ENCODE measurements at regions of chr2 and their contacts with region 1.

Region 1: GRCh38 chr2:102449370-102449974 is 23.6 kb upstream of the SLC9A4 start:
- DNase-seq: peak in 3 of 5 donors; percentile 11 to 31 (median 27)
- ATAC-seq: no peak
- H3K4me3 ChIP-seq: no peak overlapping the region
- H3K27ac ChIP-seq: no peak overlapping the region
- H3K4me1 ChIP-seq: no peaks in the 10 kb centered on the region
- H3K27me3 ChIP-seq: no peaks in the 10 kb centered on the region
- CTCF ChIP-seq: peak; percentile 47 to 77 (median 62)
- POLR2A ChIP-seq: no peak

Region 2: GRCh38 chr2:101419096-101419663 is 1030.3 kb before region 1 on chr2:
- intact Hi-C with region 1: loop called in 2 of 10 experiments (anchors 5 to 10 kb)
- DNase-seq: peak in 4 of 5 donors; percentile 47 to 68 (median 62)
- ATAC-seq: peak; percentile 55 to 89 (median 76)
- H3K4me3 ChIP-seq: no peak overlapping the region
- H3K27ac ChIP-seq: no peak overlapping the region
- H3K4me1 ChIP-seq: peaks cover 0 to 4% (median 0%) of the 10 kb centered on the region in 12 donors
- H3K27me3 ChIP-seq: no peaks in the 10 kb centered on the region
- CTCF ChIP-seq: peak; percentile 66 to 90 (median 83)
- POLR2A ChIP-seq: no peak

Region 3: DNA sequence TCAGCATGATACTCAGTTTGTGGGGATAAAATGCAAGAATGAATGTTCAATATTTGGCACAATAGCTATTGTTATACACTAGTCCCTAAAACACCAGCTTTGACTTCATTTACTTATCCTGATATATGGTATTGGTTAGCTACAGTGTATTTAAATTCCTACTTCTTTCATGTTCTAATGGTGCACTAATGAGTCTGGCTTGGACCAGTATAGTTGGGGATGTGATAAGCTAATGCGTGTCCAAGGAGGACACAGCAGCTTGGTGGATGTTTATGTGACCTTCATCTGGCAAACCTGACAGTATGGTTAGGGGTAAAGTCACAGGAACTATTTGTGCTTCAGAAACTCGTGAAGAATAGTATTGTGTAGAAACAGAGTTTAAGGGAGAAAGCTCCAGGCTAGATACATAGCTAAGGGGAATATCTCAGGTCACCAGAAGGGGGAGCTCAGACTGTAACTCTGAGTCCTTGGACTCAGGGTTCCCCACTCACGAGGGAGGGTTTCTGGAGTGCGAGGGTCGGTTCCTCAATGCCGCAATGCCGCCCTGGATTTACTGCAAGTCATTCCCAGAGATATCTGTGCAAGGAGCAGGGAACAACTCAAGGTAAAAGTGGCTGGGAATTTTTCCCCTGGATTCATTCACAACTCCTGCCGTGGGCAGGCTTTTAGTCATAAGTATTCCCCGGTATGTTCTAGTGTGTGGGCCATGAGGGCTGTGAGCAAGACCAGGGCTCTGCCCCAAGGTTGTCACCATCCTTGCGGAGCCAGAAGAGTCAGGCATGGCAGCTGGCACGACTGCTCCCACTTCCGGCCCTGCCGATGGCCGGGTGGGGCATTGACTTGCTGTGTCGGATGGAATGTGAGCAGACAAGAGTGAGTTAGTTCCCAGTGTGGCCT is 443.2 kb before region 1 on chr2:
- intact Hi-C with region 1: loop called in 6 of 10 experiments (anchors 5 to 10 kb)
- DNase-seq: peak in 1 of 5 donors; percentile 34
- ATAC-seq: peak; percentile 50 to 84 (median 70)
- H3K4me3 ChIP-seq: no peak overlapping the region
- H3K27ac ChIP-seq: no peak overlapping the region
- H3K4me1 ChIP-seq: peaks cover 0 to 29% (median 6%) of the 10 kb centered on the region in 12 donors
- H3K27me3 ChIP-seq: no peaks in the 10 kb centered on the region
- CTCF ChIP-seq: peak; percentile 36 to 73 (median 60)
- POLR2A ChIP-seq: no peak

Region 4: DNA sequence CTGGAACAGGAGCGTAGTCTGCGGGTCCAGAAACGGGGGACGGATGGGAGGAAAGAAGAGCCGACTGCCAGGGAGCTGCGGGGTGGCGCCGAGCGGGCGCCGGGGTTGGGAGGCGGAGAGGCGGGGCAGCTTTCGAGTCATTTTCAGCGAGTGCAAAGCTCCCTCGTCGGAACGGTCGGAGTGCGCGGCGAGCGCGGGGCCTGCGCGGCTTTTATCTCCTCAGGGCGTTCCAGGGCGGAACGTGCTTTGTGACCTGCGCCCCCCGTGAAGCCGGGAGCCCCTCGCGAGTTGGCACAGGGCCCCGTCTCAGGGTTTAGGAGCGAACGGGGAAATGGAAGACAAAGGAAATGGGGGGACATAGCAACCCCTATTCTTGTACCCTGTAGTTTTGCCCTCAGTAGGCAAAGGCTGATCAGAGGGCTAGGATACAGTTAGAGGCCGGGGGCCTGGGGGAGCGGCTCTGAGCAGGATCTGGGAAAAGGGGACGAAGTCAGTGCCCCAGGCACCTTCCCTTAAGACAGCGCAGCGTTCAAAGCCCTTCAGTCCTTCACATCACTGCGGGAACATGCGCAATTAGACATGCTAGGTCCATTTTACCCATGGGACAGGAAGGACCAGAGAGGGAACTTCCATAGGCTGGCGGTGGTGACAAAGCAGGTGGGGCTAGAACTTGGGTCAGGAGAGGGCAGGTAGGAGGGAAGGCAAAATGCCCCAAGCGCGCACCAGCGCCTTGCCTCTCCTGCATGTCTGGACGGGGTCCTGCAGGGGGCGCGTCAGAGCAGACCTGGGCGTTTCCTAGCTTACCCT is 198.2 kb before region 1 on chr2:
- intact Hi-C with region 1: loop called in 8 of 10 experiments (anchors 5 to 10 kb)
- DNase-seq: peak; percentile 51 to 81 (median 63)
- ATAC-seq: peak; percentile 63 to 86 (median 78)
- H3K4me3 ChIP-seq: peak overlapping the region in 11 of 12 donors; percentile 25 to 61 (median 45)
- H3K27ac ChIP-seq: peak overlapping the region in 3 of 12 donors; percentile 15 to 74 (median 45)
- H3K4me1 ChIP-seq: peaks cover 0 to 29% (median 7%) of the 10 kb centered on the region in 12 donors
- H3K27me3 ChIP-seq: peaks cover 0 to 19% (median 3%) of the 10 kb centered on the region in 9 donors
- CTCF ChIP-seq: peak; percentile 53 to 78 (median 66)
- POLR2A ChIP-seq: no peak

Region 5: DNA sequence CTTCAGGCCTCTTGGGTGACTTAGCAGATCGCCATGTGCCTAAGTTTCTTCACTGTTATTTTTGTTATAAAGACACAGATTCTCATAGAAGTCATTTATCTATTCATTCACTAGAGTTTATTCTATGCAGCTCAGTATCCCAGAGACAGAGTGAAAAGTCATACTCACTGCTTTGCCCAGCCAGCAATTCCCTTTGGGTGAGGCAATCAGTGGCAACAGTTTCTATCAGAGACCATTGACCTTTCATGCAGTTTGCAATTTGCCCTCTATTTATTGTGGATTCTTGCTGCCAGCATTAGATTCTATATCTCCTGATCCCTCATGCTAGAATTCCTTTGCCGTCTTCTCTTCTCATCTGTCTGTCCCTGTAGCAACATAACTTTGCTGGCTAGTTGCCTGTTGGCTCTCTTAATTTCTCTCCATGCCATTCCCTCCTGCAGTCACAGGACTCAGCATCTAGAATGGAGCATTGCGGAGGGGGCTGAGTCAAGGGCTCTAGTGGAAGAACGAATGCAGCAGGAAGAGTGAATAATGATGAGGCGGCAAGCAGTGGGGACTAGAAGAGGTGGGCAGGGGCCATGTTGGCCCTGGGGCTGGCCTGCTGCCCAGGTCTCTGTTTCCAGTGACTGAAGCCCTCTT is 35.8 kb after region 1 on chr2:
- intact Hi-C with region 1: no loop called
- DNase-seq: no peak
- ATAC-seq: no peak
- H3K4me3 ChIP-seq: no peak overlapping the region
- H3K27ac ChIP-seq: no peak overlapping the region
- H3K4me1 ChIP-seq: no peaks in the 10 kb centered on the region
- H3K27me3 ChIP-seq: peaks cover 0 to 18% (median 2%) of the 10 kb centered on the region in 9 donors
- CTCF ChIP-seq: no peak
- POLR2A ChIP-seq: no peak

Region 6: GRCh38 chr2:103009871-103010270 is 560.4 kb after region 1 on chr2:
- intact Hi-C with region 1: no loop called
- DNase-seq: no peak
- ATAC-seq: no peak
- H3K4me3 ChIP-seq: no peak overlapping the region
- H3K27ac ChIP-seq: no peak overlapping the region
- H3K4me1 ChIP-seq: no peaks in the 10 kb centered on the region
- H3K27me3 ChIP-seq: peaks cover 0 to 4% (median 0%) of the 10 kb centered on the region in 9 donors
- CTCF ChIP-seq: no peak
- POLR2A ChIP-seq: no peak

Measured in heart left ventricle (tissue), 16 donors.